ENCODE measurements at regions of chr12 and their contacts with region 1.

Region 1: GRCh38 chr12:95942524-95943329 is at the start of gene CCDC38:
- DNase-seq: peak; percentile 88
- ATAC-seq: peak; percentile 90
- H3K4me3 ChIP-seq: peak within 1 kb of the TSS; percentile 72 to 92 (median 86)
- H3K27ac ChIP-seq: peak within 1 kb of the TSS; percentile 88
- H3K4me1 ChIP-seq: peaks cover 53% of the 10 kb centered on the region
- H3K27me3 ChIP-seq: no peaks in the 10 kb centered on the region; a peak in 1 of 5 replicates
- CTCF ChIP-seq: no peak
- EP300 ChIP-seq: peak in 1 of 2 experiments; percentile 61; a peak in 3 of 4 replicates
- POLR2A ChIP-seq: peak; percentile 57 to 62
- RAD21 ChIP-seq: no peak
- total RNA-seq, gene CCDC38: 0.18 and 0.24 TPM in 2 replicates

Region 2: GRCh38 chr12:95953000-95953399 is 10.3 kb after region 1 on chr12:
- CTCF ChIA-PET with region 1: no interaction called
- POLR2A ChIA-PET with region 1: interaction called, 41 read pairs
- in situ Hi-C with region 1: no loop called
- intact Hi-C with region 1: no loop called
- DNase-seq: no peak
- ATAC-seq: no peak
- H3K4me3 ChIP-seq: no peak overlapping the region
- H3K27ac ChIP-seq: no peak overlapping the region
- H3K4me1 ChIP-seq: peaks cover 63% of the 10 kb centered on the region
- H3K27me3 ChIP-seq: no peaks in the 10 kb centered on the region
- CTCF ChIP-seq: no peak
- EP300 ChIP-seq: no peak
- POLR2A ChIP-seq: no peak
- RAD21 ChIP-seq: no peak

Region 3: DNA sequence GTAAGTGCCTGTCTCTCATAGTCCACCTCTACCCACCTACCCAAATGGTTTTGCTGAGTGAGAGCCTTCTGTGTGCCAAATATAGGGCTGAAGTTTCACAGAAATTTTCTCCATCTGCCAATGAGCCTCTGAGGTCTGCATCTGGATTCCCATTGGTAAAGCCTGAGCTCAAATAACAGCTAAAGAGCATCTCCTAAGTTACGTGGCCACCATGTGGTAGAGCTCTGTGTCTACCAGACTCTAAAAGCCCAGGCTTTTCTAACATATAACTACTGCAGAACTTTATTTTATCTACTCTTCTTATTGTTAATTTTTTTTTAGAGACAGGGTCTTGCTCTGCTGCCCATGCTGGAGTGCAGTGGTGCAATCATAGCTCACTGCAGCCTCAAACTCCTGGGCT is 16.4 kb after region 1 on chr12:
- CTCF ChIA-PET with region 1: no interaction called
- POLR2A ChIA-PET with region 1: interaction called, 41 read pairs
- in situ Hi-C with region 1: no loop called
- intact Hi-C with region 1: no loop called
- DNase-seq: peak; percentile 59
- ATAC-seq: peak; percentile 89
- H3K4me3 ChIP-seq: no peak overlapping the region
- H3K27ac ChIP-seq: no peak overlapping the region
- H3K4me1 ChIP-seq: peaks cover 45% of the 10 kb centered on the region
- H3K27me3 ChIP-seq: no peaks in the 10 kb centered on the region
- CTCF ChIP-seq: peak; percentile 54
- EP300 ChIP-seq: no peak
- POLR2A ChIP-seq: no peak
- RAD21 ChIP-seq: peak; percentile 75; the same call in 1 of the 2 replicates

Region 4: GRCh38 chr12:95966287-95966870 is 23.7 kb after region 1 on chr12:
- CTCF ChIA-PET with region 1: no interaction called
- POLR2A ChIA-PET with region 1: interaction called, 30 read pairs
- in situ Hi-C with region 1: no loop called
- intact Hi-C with region 1: no loop called
- DNase-seq: peak; percentile 87
- ATAC-seq: peak; percentile 96
- H3K4me3 ChIP-seq: peak overlapping the region in 2 of 3 experiments; percentile 32 to 38; a peak in 3 of 6 replicates
- H3K27ac ChIP-seq: peak overlapping the region; percentile 85
- H3K4me1 ChIP-seq: peaks cover 47% of the 10 kb centered on the region
- H3K27me3 ChIP-seq: no peaks in the 10 kb centered on the region
- CTCF ChIP-seq: no peak
- EP300 ChIP-seq: peak in 1 of 2 experiments; percentile 83; a peak in 2 of 4 replicates
- POLR2A ChIP-seq: peak; percentile 39 to 41; a peak in 1 of 4 replicates
- RAD21 ChIP-seq: 0 out of 2 replicates have a peak, but pooled peaks have one; percentile 26

Region 5: GRCh38 chr12:95976416-95976832 is 33.7 kb after region 1 on chr12:
- CTCF ChIA-PET with region 1: no interaction called
- POLR2A ChIA-PET with region 1: interaction called, 92 read pairs
- in situ Hi-C with region 1: no loop called
- intact Hi-C with region 1: no loop called
- DNase-seq: peak; percentile 82
- ATAC-seq: peak; percentile 86
- H3K4me3 ChIP-seq: 0 out of 6 replicates have a peak overlapping the region, but pooled peaks of 1 of the 3 experiments have one; percentile 11
- H3K27ac ChIP-seq: peak overlapping the region; percentile 74
- H3K4me1 ChIP-seq: peaks cover 82% of the 10 kb centered on the region
- H3K27me3 ChIP-seq: no peaks in the 10 kb centered on the region
- CTCF ChIP-seq: no peak
- EP300 ChIP-seq: peak; percentile 27 to 88; a peak in 2 of 4 replicates
- POLR2A ChIP-seq: no peak
- RAD21 ChIP-seq: no peak

Measured in HepG2 (cell line).